ENCODE measurements at regions of chr19 and their contacts with region 1.

Region 1: GRCh38 chr19:7868676-7869452 is 5.3 kb downstream of the PRR36 start:
- DNase-seq: peak; percentile 95
- ATAC-seq: peak; percentile 41
- H3K4me3 Mint-ChIP-seq: peak overlapping the region; percentile 63
- H3K27ac Mint-ChIP-seq: peak overlapping the region; percentile 78; the same call in 1 of the 2 replicates
- H3K4me1 Mint-ChIP-seq: peaks cover 28% of the 10 kb centered on the region
- H3K27me3 Mint-ChIP-seq: peaks cover 62% of the 10 kb centered on the region
- CTCF ChIP-seq: peak; percentile 77

Region 2: DNA sequence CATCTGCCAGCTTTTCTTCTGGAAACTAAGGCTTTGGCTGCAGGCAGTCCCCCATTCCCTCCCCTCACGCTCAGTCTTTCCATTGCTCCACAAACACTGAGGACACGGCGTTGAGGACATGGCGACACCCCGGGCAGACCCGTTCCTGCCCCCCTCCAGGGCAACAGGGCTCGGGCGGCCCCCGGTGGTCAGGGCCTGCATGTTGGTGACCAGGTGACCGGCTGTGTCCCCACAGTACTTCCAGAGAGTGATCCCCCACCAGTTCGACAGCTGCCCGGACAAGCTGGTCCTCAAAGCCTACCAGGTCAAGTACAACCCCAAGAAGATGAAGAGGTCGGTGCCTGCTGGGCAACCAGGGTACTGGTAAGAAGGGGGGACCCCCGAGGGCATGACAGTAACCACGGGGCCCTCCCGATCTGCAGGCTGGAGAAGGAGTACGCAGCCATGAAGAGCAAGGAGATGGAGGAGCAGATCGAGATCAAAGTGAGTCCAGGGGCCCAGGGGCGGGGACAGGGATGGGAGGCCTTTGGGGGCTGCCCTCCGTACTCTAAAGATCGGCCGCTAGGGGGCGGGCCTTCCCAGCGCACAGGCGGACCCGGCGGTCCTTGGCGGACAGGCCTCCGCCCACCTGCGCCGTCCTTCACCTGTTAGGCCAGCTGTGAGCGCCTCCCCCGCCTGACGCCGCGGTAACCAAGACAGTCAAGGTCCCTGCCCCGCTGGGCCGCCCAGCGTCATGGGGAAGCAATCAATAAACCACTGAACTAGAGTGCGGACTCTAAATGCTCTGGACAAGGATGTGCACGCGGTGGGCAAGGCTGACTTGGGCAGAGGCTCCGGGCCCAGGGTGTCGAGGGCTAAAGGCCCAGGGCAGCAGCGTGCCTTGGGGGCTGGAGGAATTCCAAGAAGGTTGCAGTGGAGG is 15.8 kb before region 1 on chr19:
- CTCF ChIA-PET with region 1: interaction called, 65 read pairs
- POLR2A ChIA-PET with region 1: interaction called, 19 read pairs
- DNase-seq: peak; percentile 96
- ATAC-seq: peak; percentile 86
- H3K4me3 Mint-ChIP-seq: peak overlapping the region; percentile 51
- H3K27ac Mint-ChIP-seq: no peak overlapping the region
- H3K4me1 Mint-ChIP-seq: peaks cover 6% of the 10 kb centered on the region; the same call in 1 of the 2 replicates
- H3K27me3 Mint-ChIP-seq: peaks cover 37% of the 10 kb centered on the region
- CTCF ChIP-seq: peak; percentile 95

Region 3: GRCh38 chr19:7903244-7904073 is 34.6 kb after region 1 on chr19 and contains the start of gene MAP2K7:
- CTCF ChIA-PET with region 1: interaction called, 70 read pairs
- POLR2A ChIA-PET with region 1: interaction called, 10 read pairs
- DNase-seq: peak; percentile 100
- ATAC-seq: peak; percentile 87
- H3K4me3 Mint-ChIP-seq: peak within 1 kb of the TSS; percentile 90
- H3K27ac Mint-ChIP-seq: peak within 1 kb of the TSS; percentile 97
- H3K4me1 Mint-ChIP-seq: peaks cover 20% of the 10 kb centered on the region
- H3K27me3 Mint-ChIP-seq: peaks cover 13% of the 10 kb centered on the region
- CTCF ChIP-seq: no peak
- total RNA-seq, gene MAP2K7: 39.4 to 46.9 TPM (median 46.3 TPM) in 3 replicates

Region 4: DNA sequence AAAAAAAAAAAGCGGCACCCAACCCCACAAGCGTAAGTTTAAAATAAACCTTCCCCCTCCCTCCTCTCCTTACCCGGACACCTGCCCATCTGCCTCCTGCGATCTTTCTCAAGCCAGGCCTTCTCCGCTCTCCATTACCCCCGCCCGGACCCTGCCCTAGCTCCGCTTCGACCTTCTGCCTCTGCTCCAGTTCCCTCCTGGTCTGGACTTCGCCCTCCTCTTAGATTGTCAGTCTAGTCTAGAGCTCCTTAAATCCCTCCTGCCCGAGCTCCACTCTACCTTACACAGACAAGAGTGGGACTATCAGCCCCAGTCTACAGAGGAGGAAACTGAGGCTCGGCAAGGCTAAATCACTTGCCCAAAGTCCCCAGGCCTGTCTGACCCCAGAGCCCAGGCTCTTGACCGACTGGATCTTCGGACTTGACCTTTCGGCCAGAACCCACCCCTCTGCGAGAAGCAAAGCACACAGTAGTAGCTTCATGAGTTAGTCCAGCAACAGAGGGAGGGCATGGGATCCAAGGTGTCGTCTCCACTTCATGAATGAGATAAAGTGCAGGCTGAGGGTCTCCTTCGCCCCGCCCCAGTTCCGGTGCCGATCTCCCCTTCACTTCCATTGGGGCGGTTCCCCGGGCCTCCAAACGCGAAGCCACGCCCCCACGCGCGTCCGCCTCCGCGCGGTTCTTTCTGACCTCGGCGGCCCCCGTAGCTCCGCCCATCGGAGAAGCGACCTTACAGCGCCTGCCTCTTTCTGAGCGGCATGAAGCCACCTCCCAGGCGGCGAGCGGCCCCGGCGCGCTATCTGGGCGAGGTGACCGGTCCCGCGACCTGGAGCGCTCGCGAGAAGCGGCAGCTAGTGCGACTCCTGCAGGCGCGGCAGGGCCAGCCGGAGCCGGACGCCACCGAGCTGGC is 51.0 kb after region 1 on chr19 and contains the start of gene SNAPC2:
- CTCF ChIA-PET with region 1: interaction called, 92 read pairs
- POLR2A ChIA-PET with region 1: interaction called, 6 read pairs
- DNase-seq: peak; percentile 98
- ATAC-seq: peak; percentile 50
- H3K4me3 Mint-ChIP-seq: peak within 1 kb of the TSS; percentile 75
- H3K27ac Mint-ChIP-seq: peak within 1 kb of the TSS; percentile 76
- H3K4me1 Mint-ChIP-seq: peaks cover 8% of the 10 kb centered on the region
- H3K27me3 Mint-ChIP-seq: peaks cover 49% of the 10 kb centered on the region
- CTCF ChIP-seq: no peak
- total RNA-seq, gene SNAPC2: 23.2 to 24.3 TPM (median 23.7 TPM) in 3 replicates

Measured in WTC11 (cell line).